Heart left ventricle (tissue), 16 donors: ENCODE measurements at regions of chr16 and their contacts with region 1.

Region 1: DNA sequence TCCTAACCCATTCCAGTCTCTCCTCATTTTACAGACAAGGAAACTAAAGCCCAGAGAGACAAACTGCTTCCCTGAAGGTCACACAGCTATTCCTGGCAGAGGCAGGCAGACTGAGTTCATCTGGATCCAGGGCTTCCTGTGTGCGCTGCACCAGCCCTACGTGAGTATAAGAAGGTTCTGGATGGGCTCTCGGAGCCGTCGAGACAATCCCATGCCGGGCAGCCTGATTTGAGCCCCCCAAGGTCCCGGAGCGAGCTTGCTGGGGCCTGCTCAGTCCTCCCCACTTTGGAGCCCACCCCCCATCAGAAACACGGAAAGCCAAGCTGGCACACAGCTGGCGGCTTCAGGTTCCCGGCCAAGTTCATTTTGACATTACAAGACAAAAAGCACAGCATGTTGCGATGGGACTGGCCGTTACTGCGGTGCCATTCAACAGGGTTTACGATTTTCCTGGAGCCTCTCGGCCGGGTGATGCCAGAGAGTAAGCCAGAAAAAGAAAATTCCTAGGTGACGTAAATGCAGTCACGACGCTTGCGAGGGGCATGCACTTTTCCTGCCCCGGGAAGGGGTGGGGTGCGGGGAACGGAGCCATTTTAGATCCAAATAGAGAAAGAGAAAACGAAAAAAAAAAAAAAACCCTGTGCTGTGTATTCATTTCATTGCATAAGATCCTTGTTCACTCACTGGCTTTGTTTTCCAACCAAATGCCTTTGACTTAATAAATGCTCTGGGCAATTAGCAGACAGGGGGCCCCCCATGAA is 167.1 kb upstream of the FOXF1 start:
- DNase-seq: peak in 3 of 5 donors; percentile 34 to 41 (median 36)
- ATAC-seq: peak in 2 of 4 donors; percentile 21 to 85
- H3K4me3 ChIP-seq: peak overlapping the region in 6 of 12 donors; percentile 9 to 28 (median 13)
- H3K27ac ChIP-seq: peak overlapping the region in 5 of 12 donors; percentile 40 to 87 (median 51)
- H3K4me1 ChIP-seq: peaks cover 0 to 18% (median 9%) of the 10 kb centered on the region in 12 donors
- H3K27me3 ChIP-seq: peaks cover 3 to 69% (median 19%) of the 10 kb centered on the region in 9 donors
- CTCF ChIP-seq: no peak
- POLR2A ChIP-seq: no peak

Region 2: DNA sequence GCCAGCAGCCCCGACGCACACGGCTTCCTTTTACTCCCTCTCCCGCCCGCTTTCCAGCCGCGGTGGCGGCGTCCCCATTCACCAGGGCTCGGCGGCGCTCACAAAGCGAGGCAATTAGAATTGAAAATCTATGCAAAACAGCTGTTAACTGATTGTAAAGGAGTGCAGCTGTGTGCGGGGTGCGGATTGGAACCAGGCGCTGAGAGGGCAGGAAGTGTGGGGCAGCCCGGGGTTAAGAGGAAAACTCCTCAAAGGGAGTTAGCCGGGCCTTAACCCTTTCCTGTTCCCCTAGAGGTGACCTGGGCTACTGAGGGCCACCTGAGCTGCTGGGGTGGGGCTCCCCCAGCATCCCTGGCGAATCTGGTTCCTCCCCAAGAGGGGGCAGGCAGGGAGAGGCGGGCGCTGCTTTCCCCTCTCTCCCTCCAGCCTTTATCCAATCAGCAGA is 735.9 kb before region 1 on chr16:
- intact Hi-C with region 1: no loop called
- DNase-seq: no peak
- ATAC-seq: no peak
- H3K4me3 ChIP-seq: peak overlapping the region in 1 of 12 donors; percentile 13
- H3K27ac ChIP-seq: peak overlapping the region in 1 of 12 donors; percentile 72
- H3K4me1 ChIP-seq: peaks cover 0 to 51% (median 32%) of the 10 kb centered on the region in 12 donors
- H3K27me3 ChIP-seq: no peaks in the 10 kb centered on the region
- CTCF ChIP-seq: peak in 1 of 12 donors; percentile 9
- POLR2A ChIP-seq: no peak

Region 3: GRCh38 chr16:86072328-86073102 is 270.7 kb before region 1 on chr16:
- intact Hi-C with region 1: loop called in 1 of 10 experiments (anchors 5 kb)
- DNase-seq: peak in 4 of 5 donors; percentile 52 to 70 (median 52)
- ATAC-seq: peak in 2 of 4 donors; percentile 60 to 73
- H3K4me3 ChIP-seq: no peak overlapping the region
- H3K27ac ChIP-seq: no peak overlapping the region
- H3K4me1 ChIP-seq: no peaks in the 10 kb centered on the region
- H3K27me3 ChIP-seq: peaks cover 0 to 58% (median 7%) of the 10 kb centered on the region in 9 donors
- CTCF ChIP-seq: peak; percentile 68 to 86 (median 77)
- POLR2A ChIP-seq: no peak

Region 4: DNA sequence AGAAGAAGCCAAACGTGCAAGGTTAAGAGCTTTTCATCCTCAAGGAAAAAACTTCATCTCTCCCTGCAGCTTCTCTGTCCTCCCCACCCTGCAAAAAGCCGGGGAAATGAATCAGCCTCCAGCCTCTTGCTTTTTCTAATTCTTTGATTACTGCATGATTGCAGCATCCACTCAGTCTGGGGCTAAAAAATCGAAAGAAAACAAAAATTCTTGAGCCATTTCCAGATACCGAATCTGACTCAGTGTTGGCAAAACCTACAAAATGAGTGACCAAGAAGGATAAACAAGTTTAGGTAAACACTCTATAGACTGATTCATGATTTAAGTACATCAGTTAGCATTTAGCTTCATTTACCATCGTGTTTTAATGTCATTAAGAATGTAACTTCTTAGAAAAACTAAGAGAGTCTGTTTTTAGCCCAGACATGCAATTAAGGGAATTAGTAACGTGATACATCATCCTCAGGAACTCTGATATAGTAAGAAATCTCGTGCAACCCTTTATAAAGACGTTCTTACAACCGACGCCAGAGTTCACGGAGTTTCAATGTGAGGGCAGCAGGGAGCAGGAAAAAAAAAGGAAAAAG is 120.1 kb before region 1 on chr16:
- intact Hi-C with region 1: no loop called
- DNase-seq: no peak
- ATAC-seq: no peak
- H3K4me3 ChIP-seq: no peak overlapping the region
- H3K27ac ChIP-seq: no peak overlapping the region
- H3K4me1 ChIP-seq: no peaks in the 10 kb centered on the region
- H3K27me3 ChIP-seq: peaks cover 0 to 50% (median 13%) of the 10 kb centered on the region in 9 donors
- CTCF ChIP-seq: no peak
- POLR2A ChIP-seq: no peak

Region 5: GRCh38 chr16:86322806-86323205 is 20.4 kb before region 1 on chr16:
- intact Hi-C with region 1: no loop called
- DNase-seq: no peak
- ATAC-seq: no peak
- H3K4me3 ChIP-seq: no peak overlapping the region
- H3K27ac ChIP-seq: no peak overlapping the region
- H3K4me1 ChIP-seq: peaks cover 0 to 3% (median 0%) of the 10 kb centered on the region in 12 donors
- H3K27me3 ChIP-seq: peaks cover 0 to 55% (median 4%) of the 10 kb centered on the region in 9 donors
- CTCF ChIP-seq: no peak
- POLR2A ChIP-seq: no peak

Region 6: GRCh38 chr16:86387461-86388440 is 44.5 kb after region 1 on chr16:
- intact Hi-C with region 1: no loop called
- DNase-seq: no peak
- ATAC-seq: no peak
- H3K4me3 ChIP-seq: no peak overlapping the region
- H3K27ac ChIP-seq: no peak overlapping the region
- H3K4me1 ChIP-seq: peaks cover 0 to 7% (median 0%) of the 10 kb centered on the region in 12 donors
- H3K27me3 ChIP-seq: peaks cover 0 to 60% (median 9%) of the 10 kb centered on the region in 9 donors
- CTCF ChIP-seq: no peak
- POLR2A ChIP-seq: no peak